Mammary epithelial cell (primary cell): ENCODE measurements at regions of chr11 and their contacts with region 1.

Region 1: DNA sequence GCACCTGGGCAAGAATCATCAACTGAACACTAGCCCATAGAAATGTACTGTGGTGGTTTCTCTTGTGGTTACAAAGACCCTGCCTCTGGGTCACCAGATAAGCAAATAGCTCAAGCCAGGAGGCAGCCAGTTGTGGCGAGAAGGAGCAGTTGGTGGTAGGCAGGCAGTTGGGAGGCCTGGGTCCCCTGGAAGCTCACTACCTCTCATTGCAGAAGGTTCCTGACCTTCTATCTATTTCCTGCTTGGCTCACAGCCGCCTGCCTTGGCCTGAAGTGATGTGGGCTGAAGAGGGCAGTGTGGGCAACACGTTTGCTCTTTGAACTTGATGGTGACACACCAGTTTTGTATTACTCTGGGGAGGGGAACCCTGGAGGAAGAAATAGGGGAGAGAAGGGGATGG is 34.7 kb downstream of the NECTIN1 start:
- DNase-seq: peak; percentile 56
- H3K4me3 ChIP-seq: no peak overlapping the region
- H3K27ac ChIP-seq: peak overlapping the region; percentile 97
- H3K4me1 ChIP-seq: peaks cover 99% of the 10 kb centered on the region
- H3K27me3 ChIP-seq: no peaks in the 10 kb centered on the region
- CTCF ChIP-seq: peak; percentile 14 to 35

Region 2: GRCh38 chr11:119673759-119674336 is 20.5 kb before region 1 on chr11:
- CTCF ChIA-PET with region 1: no interaction called
- dilution Hi-C with region 1: no loop called
- in situ Hi-C with region 1: no loop called
- intact Hi-C with region 1: loop called (anchors 2 kb)
- DNase-seq: no peak
- H3K4me3 ChIP-seq: no peak overlapping the region
- H3K27ac ChIP-seq: no peak overlapping the region
- H3K4me1 ChIP-seq: peaks cover 38% of the 10 kb centered on the region
- H3K27me3 ChIP-seq: no peaks in the 10 kb centered on the region
- CTCF ChIP-seq: peak in 1 of 2 donors; percentile 30

Region 3: DNA sequence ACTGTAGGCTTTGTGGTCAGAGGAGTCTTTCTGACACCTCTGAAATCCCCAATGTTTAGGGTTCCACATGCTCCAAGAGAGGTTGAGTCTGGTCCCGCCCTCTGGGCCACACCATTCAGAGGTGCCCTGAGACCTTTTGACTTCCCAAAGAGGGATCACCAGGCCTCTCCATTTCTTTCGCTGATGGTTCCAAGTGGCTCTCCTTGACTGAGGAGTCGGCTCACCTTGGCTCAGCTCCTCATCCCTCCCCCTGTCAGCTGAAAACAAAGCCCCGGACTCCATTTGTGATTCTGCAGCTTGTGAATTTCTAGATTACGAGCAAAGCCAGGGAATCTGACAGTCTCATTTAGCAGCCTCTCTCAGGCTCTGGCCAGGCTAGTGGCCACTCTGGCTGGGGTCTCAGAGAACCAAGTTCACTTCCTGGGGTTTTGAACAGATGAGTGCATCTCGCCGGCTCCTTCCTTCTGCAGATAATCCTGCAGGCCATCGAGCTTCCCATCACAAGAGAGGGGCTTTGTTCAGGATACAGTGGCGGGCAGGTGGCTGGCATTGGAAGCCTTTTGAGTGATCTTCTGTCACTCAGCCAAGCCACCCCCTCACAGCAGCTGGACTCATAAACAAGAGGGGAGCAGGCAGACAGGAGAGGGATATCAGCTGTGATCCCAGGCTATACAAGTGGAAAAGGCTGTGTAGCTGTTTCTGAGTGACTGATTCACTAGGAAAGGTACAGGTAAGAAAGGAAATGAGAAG is 340.7 kb after region 1 on chr11:
- CTCF ChIA-PET with region 1: no interaction called
- dilution Hi-C with region 1: no loop called
- in situ Hi-C with region 1: no loop called
- intact Hi-C with region 1: no loop called
- DNase-seq: no peak
- H3K4me3 ChIP-seq: no peak overlapping the region
- H3K27ac ChIP-seq: no peak overlapping the region
- H3K4me1 ChIP-seq: no peaks in the 10 kb centered on the region
- H3K27me3 ChIP-seq: no peaks in the 10 kb centered on the region
- CTCF ChIP-seq: no peak